Activated CD4-positive, alpha-beta T cell treated with anti-CD3 and anti-CD28 coated beads for 36 hours (primary cell): ENCODE measurements at regions of chr19 and their contacts with region 1.

Region 1: GRCh38 chr19:10543420-10544241 is at the start of gene ATG4D:
- DNase-seq: peak; percentile 89
- ATAC-seq: peak; percentile 85
- H3K4me3 Mint-ChIP-seq: peak within 1 kb of the TSS; percentile 85
- H3K27ac Mint-ChIP-seq: peak within 1 kb of the TSS; percentile 84
- H3K4me1 Mint-ChIP-seq: peaks cover 14% of the 10 kb centered on the region
- H3K27me3 Mint-ChIP-seq: peaks cover 8% of the 10 kb centered on the region
- total RNA-seq, gene ATG4D: 18.9 to 19.3 TPM

Region 2: GRCh38 chr19:9839415-9839814 is 704.2 kb before region 1 on chr19:
- CTCF ChIA-PET with region 1: no interaction called
- POLR2A ChIA-PET with region 1: no interaction called
- intact Hi-C with region 1: no loop called
- DNase-seq: no peak
- ATAC-seq: no peak
- H3K4me3 Mint-ChIP-seq: no peak overlapping the region
- H3K27ac Mint-ChIP-seq: no peak overlapping the region
- H3K4me1 Mint-ChIP-seq: peaks cover 15% of the 10 kb centered on the region
- H3K27me3 Mint-ChIP-seq: no peaks in the 10 kb centered on the region

Region 3: GRCh38 chr19:10269333-10270179 is 274.1 kb before region 1 on chr19:
- CTCF ChIA-PET with region 1: no interaction called
- POLR2A ChIA-PET with region 1: no interaction called
- intact Hi-C with region 1: no loop called
- DNase-seq: peak; percentile 94
- ATAC-seq: peak; percentile 62
- H3K4me3 Mint-ChIP-seq: peak overlapping the region; percentile 80
- H3K27ac Mint-ChIP-seq: peak overlapping the region; percentile 91
- H3K4me1 Mint-ChIP-seq: peaks cover 35% of the 10 kb centered on the region
- H3K27me3 Mint-ChIP-seq: no peaks in the 10 kb centered on the region

Region 4: GRCh38 chr19:10461047-10461790 is 82.4 kb before region 1 on chr19:
- CTCF ChIA-PET with region 1: no interaction called
- POLR2A ChIA-PET with region 1: no interaction called
- intact Hi-C with region 1: loop called in 1 of 2 experiments (anchors 1 kb)
- DNase-seq: peak; percentile 98
- ATAC-seq: peak; percentile 98
- H3K4me3 Mint-ChIP-seq: peak overlapping the region; percentile 43
- H3K27ac Mint-ChIP-seq: no peak overlapping the region
- H3K4me1 Mint-ChIP-seq: peaks cover 9% of the 10 kb centered on the region
- H3K27me3 Mint-ChIP-seq: peaks cover 3% of the 10 kb centered on the region

Region 5: GRCh38 chr19:10502524-10503001 is 41.1 kb before region 1 on chr19:
- CTCF ChIA-PET with region 1: interaction called, 3 read pairs
- POLR2A ChIA-PET with region 1: no interaction called
- intact Hi-C with region 1: loop called in 1 of 2 experiments (anchors 1 kb)
- DNase-seq: peak; percentile 95
- ATAC-seq: peak; percentile 91
- H3K4me3 Mint-ChIP-seq: peak overlapping the region; percentile 91
- H3K27ac Mint-ChIP-seq: peak overlapping the region; percentile 95
- H3K4me1 Mint-ChIP-seq: peaks cover 30% of the 10 kb centered on the region
- H3K27me3 Mint-ChIP-seq: no peaks in the 10 kb centered on the region

Region 6: GRCh38 chr19:10510301-10510802 is 33.3 kb before region 1 on chr19:
- CTCF ChIA-PET with region 1: interaction called, 3 read pairs
- POLR2A ChIA-PET with region 1: no interaction called
- intact Hi-C with region 1: loop called in 1 of 2 experiments (anchors 2 kb)
- DNase-seq: peak; percentile 74
- ATAC-seq: no peak
- H3K4me3 Mint-ChIP-seq: no peak overlapping the region
- H3K27ac Mint-ChIP-seq: no peak overlapping the region
- H3K4me1 Mint-ChIP-seq: peaks cover 16% of the 10 kb centered on the region
- H3K27me3 Mint-ChIP-seq: peaks cover 20% of the 10 kb centered on the region

Region 7: DNA sequence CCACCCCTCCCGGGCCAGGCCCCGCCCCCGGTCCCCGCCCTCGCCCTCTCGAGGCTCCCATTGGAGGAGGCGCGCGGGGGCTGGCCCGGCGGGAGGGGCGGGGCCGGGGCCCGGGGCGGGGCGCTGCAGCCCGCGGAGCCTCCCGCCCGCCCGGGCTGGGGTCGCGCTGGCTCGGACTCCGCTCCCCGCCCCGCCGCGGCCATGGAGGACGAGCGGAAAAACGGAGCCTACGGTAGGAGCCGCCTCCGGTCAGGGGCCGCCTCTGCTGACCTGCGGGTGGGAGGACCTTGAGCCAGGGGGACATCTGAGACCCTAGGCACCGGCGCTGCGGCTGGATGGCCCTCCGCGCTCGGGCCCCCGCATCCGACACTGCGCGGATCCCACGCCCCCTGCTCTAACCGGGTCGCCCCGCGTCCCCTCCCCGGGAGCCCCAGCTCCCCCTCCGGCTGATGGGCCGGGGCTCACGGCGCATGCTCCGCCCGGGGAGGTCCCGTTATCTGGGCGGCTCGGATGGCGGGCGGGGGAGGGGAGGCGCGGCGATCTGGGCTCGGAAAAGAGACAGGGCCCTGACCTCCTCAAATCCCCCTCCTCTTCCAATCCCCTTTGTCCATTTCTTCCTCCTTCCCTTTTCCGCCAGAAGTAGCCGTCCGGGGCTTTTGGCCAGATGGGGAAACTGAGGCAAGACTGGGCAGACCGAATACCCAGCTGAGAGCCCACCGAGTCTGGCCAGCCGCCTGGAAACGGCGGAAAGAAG is 58.9 kb after region 1 on chr19:
- CTCF ChIA-PET with region 1: no interaction called
- POLR2A ChIA-PET with region 1: no interaction called
- intact Hi-C with region 1: loop called in 1 of 2 experiments (anchors 1 kb)
- DNase-seq: peak; percentile 95
- ATAC-seq: peak; percentile 84
- H3K4me3 Mint-ChIP-seq: peak overlapping the region; percentile 95
- H3K27ac Mint-ChIP-seq: peak overlapping the region; percentile 99
- H3K4me1 Mint-ChIP-seq: peaks cover 24% of the 10 kb centered on the region
- H3K27me3 Mint-ChIP-seq: no peaks in the 10 kb centered on the region

Region 8: DNA sequence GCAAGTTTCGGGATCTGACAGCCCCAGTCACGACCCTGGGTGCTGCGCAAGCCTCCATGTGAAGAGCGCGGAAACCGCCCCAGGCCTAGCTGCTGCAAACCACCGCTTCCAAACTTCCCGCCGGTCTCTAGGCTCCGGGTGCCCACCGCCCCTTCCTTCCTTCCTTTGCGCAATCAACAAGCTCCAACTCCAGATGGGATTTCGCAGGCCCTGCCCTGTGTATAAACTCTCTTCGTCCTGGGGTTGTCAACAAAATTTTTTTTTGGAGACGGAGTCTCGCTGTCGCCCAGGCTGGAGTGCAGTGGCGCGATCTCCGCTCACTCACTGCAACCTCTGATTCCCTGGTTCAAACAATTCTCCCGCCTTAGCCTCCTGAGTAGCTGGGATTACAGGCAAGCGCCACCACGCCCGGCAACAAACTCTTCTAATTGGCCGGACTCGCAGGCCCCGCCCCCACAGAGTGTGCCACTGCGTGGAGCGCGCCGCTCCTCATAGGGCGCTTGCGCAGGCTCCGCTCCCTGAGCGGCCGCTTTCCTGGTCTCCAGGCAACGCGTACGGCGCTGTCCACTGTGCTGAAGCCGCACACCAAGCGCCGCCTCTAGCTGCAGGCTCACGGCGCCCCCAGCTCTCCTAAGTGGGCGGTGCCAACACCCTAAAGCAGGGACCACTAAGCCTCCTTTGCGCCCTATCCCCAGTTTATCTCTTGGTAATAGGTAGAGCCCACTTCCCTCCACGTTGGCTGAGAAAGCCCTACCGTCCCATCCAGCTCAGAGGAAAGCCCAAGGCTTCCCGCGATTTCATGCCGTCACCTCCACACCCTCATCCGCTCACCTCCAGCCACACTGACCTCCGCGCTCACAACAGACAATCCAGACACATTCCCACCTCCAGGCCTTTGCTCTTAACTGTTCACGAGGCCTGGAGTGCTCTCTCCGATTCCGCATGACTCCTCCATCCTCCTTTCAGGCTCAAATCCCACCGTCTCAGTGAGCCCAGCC is 152.1 kb after region 1 on chr19:
- CTCF ChIA-PET with region 1: no interaction called
- POLR2A ChIA-PET with region 1: no interaction called
- intact Hi-C with region 1: loop called in 1 of 2 experiments (anchors 1 kb)
- DNase-seq: peak; percentile 95
- ATAC-seq: peak; percentile 99
- H3K4me3 Mint-ChIP-seq: peak overlapping the region; percentile 59
- H3K27ac Mint-ChIP-seq: no peak overlapping the region
- H3K4me1 Mint-ChIP-seq: peaks cover 13% of the 10 kb centered on the region
- H3K27me3 Mint-ChIP-seq: no peaks in the 10 kb centered on the region

Region 9: DNA sequence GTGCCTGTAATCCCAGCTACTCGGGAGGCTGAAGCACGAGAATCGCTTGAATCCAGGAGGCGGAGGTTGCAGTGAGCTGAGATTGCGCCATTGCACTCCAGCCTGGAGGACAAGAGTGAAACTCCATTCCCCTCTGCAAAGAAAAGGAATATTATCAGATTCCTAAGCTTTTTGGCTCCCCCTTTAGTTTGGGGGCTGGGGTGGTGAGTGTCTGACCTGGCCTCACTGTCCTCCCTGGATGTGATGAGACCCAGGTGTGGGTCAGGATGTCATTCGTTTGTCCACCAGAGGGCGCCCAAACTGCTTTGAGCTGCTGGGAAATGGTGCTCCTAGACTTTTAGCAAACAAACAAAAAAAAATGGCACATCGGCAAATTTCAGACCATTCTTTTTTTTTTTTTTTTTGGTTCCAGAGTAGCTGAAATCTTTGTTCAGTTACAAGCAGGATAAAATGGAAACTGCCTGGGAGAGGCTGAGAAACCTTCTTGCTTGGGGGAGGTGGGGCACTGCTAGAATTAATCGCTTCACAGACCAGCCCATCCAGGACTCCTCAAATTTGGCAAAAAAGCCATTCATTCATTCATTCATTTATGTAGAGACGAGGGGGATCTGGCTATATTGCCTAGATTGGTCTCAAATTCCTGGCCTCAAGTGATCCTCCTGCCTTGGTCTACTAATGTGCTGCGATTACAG is 582.5 kb after region 1 on chr19:
- CTCF ChIA-PET with region 1: no interaction called
- POLR2A ChIA-PET with region 1: no interaction called
- intact Hi-C with region 1: no loop called
- DNase-seq: peak; percentile 88
- ATAC-seq: peak; percentile 78
- H3K4me3 Mint-ChIP-seq: no peak overlapping the region
- H3K27ac Mint-ChIP-seq: no peak overlapping the region
- H3K4me1 Mint-ChIP-seq: no peaks in the 10 kb centered on the region
- H3K27me3 Mint-ChIP-seq: no peaks in the 10 kb centered on the region